ENCODE measurements at regions of chr16 and their contacts with region 1.

Region 1: DNA sequence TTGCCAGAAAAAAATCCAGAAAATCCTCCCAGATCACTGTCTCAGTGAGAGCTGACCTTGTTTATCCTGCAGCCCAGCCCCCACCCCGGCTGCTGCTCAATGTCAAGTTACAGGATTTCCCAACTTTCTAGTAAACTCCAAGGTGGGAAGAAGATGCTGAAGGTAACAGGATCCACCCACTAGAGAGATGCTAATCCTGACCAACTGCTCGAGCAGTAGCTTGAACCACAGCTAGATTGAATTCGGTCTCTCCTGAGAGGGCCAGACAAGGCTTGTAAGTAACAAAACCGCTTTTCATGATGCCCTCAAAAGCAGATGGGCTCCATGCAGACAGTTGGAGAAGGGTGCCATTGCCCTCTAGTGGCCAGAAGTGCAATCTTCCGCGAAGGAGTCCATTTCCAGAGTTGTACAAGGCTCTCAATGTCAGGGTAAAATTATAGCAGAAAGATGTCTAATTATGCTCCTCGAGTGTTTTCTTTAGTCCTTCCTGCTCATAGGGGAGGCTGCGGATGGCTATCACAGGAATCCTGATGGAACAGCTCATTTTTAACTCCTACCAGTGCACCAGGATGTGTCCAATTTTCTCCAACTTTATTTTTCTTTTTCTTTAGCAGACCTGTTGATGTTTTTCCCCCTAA is 3.9 kb downstream of the CDH11 start:
- DNase-seq: peak; percentile 78
- H3K4me3 Mint-ChIP-seq: no peak overlapping the region
- H3K27ac Mint-ChIP-seq: no peak overlapping the region
- H3K4me1 Mint-ChIP-seq: peaks cover 10% of the 10 kb centered on the region
- H3K27me3 Mint-ChIP-seq: peaks cover 4% of the 10 kb centered on the region
- CTCF ChIP-seq: peak; percentile 77

Region 2: GRCh38 chr16:63461248-63461841 is 1656.6 kb before region 1 on chr16:
- CTCF ChIA-PET with region 1: interaction called, 7 read pairs
- POLR2A ChIA-PET with region 1: no interaction called
- intact Hi-C with region 1: loop called (anchors 2 kb)
- DNase-seq: peak; percentile 58
- H3K4me3 Mint-ChIP-seq: no peak overlapping the region
- H3K27ac Mint-ChIP-seq: no peak overlapping the region
- H3K4me1 Mint-ChIP-seq: no peaks in the 10 kb centered on the region
- H3K27me3 Mint-ChIP-seq: no peaks in the 10 kb centered on the region
- CTCF ChIP-seq: peak; percentile 33

Region 3: GRCh38 chr16:64089697-64090096 is 1028.2 kb before region 1 on chr16:
- CTCF ChIA-PET with region 1: interaction called, 20 read pairs
- POLR2A ChIA-PET with region 1: no interaction called
- intact Hi-C with region 1: loop called (anchors 1 kb)
- DNase-seq: peak; percentile 51
- H3K4me3 Mint-ChIP-seq: no peak overlapping the region
- H3K27ac Mint-ChIP-seq: no peak overlapping the region
- H3K4me1 Mint-ChIP-seq: peaks cover 6% of the 10 kb centered on the region
- H3K27me3 Mint-ChIP-seq: no peaks in the 10 kb centered on the region
- CTCF ChIP-seq: peak; percentile 64

Region 4: DNA sequence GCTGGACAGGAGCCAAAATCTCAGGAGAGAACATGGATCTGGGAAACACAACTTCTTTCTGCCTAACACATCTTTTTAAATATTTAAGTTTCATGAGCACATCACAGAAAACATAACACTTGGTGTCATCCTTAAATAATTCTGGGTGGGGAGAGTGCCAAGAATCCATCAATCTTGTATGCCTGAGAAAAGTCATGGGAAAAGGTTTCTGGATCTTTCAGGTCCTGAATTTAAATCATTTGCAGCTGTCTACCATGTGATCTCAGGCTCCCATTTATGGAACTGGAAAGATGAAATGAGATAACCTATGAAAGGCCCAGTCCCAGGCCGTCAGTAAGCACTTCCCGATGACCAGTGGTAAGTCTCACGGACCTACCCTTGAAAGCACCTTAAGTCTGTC is 11.2 kb before region 1 on chr16:
- CTCF ChIA-PET with region 1: interaction called, 26 read pairs
- POLR2A ChIA-PET with region 1: no interaction called
- intact Hi-C with region 1: no loop called
- DNase-seq: no peak
- H3K4me3 Mint-ChIP-seq: no peak overlapping the region
- H3K27ac Mint-ChIP-seq: no peak overlapping the region
- H3K4me1 Mint-ChIP-seq: no peaks in the 10 kb centered on the region
- H3K27me3 Mint-ChIP-seq: no peaks in the 10 kb centered on the region
- CTCF ChIP-seq: no peak

Measured in MCF 10A (cell line).